Heart left ventricle (tissue), 16 donors: ENCODE measurements at regions of chr12 and their contacts with region 1.

Region 1: DNA sequence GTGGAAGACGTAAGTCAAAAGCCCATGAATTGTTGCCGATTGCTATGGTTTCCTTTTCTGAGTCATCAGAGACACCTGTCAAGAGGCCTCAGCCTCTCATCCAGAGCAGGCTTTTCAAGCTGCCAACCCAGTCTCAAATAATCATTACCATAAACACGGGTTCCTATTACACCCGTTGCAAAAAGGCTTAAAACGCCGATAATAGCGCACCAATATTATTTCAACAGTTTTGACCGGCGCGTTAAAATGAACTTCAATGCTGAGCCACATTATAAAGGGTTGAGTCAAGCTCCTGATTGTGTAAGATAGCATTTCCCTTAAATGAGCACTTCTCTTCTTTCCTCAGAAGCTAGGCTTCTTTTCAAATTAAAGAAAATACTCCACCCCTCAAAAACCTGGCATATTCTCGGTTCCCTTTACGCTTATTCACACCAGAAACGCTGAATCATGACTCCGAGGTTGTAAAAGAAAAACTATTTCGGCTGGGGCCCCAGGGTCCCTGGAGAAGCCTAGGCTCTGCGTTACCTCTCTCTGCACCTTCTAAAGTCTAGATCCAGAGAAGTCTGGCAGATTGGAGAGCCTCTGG is 1.4 kb downstream of the TMTC1 start:
- DNase-seq: no peak
- ATAC-seq: peak; percentile 39 to 49 (median 46)
- H3K4me3 ChIP-seq: peak overlapping the region; percentile 52 to 97 (median 84)
- H3K27ac ChIP-seq: peak overlapping the region; percentile 69 to 94 (median 89)
- H3K4me1 ChIP-seq: peaks cover 0 to 52% (median 12%) of the 10 kb centered on the region in 12 donors
- H3K27me3 ChIP-seq: peaks cover 0 to 12% (median 0%) of the 10 kb centered on the region in 9 donors
- CTCF ChIP-seq: no peak
- POLR2A ChIP-seq: no peak

Region 2: DNA sequence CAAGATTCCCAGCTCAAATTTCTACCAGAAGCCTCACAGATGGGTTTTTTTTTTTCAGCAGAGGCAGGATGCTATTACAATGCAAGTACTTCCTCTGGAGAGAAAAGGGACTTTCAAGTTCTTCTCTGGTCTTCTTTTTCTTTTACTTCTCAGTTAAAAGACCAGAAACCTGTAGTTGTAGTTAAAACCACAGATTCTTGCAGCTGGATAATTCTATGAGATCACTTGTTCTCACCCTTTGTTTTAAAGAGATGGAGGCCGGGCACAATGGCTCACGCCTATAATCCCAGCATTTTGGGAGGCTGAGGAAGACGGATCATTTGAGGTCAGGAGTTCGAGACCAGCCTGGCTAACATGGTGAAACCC is 237.3 kb before region 1 on chr12:
- intact Hi-C with region 1: loop called in 8 of 10 experiments (anchors 5 to 10 kb)
- DNase-seq: no peak
- ATAC-seq: no peak
- H3K4me3 ChIP-seq: no peak overlapping the region
- H3K27ac ChIP-seq: no peak overlapping the region
- H3K4me1 ChIP-seq: peaks cover 0 to 32% (median 5%) of the 10 kb centered on the region in 12 donors
- H3K27me3 ChIP-seq: no peaks in the 10 kb centered on the region
- CTCF ChIP-seq: no peak
- POLR2A ChIP-seq: no peak

Region 3: GRCh38 chr12:29562167-29562776 is 220.1 kb before region 1 on chr12:
- intact Hi-C with region 1: loop called in 5 of 10 experiments (anchors 5 to 10 kb)
- DNase-seq: peak in 4 of 5 donors; percentile 30 to 69 (median 59)
- ATAC-seq: peak; percentile 76 to 97 (median 96)
- H3K4me3 ChIP-seq: no peak overlapping the region
- H3K27ac ChIP-seq: peak overlapping the region; percentile 39 to 87 (median 72)
- H3K4me1 ChIP-seq: peaks cover 8 to 69% (median 34%) of the 10 kb centered on the region in 12 donors
- H3K27me3 ChIP-seq: no peaks in the 10 kb centered on the region
- CTCF ChIP-seq: no peak
- POLR2A ChIP-seq: no peak

Region 4: DNA sequence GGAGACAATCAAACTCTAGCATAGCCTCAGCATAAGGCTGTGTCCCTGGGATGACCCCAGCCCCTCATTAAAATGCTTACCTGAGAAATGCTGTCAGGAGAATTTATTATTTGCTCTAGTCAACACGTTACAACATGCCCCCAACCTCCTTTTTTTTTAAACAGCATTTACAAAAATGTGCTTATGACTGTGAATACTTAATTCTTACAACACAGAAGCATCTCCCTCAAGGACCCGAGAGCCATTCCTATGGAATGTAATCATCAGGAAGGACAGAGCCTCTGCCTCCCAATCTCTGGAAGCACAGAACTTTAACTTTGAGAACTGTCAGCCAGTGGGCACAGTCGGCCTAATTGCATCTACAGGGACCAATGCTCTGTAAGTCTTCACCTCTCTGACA is 148.3 kb before region 1 on chr12:
- intact Hi-C with region 1: loop called in 1 of 10 experiments (anchors 10 kb)
- DNase-seq: no peak
- ATAC-seq: no peak
- H3K4me3 ChIP-seq: no peak overlapping the region
- H3K27ac ChIP-seq: no peak overlapping the region
- H3K4me1 ChIP-seq: no peaks in the 10 kb centered on the region
- H3K27me3 ChIP-seq: no peaks in the 10 kb centered on the region
- CTCF ChIP-seq: no peak
- POLR2A ChIP-seq: no peak

Region 5: GRCh38 chr12:29662734-29663323 is 119.5 kb before region 1 on chr12:
- intact Hi-C with region 1: loop called in 1 of 10 experiments (anchors 10 kb)
- DNase-seq: no peak
- ATAC-seq: peak in 3 of 4 donors; percentile 25 to 69 (median 57)
- H3K4me3 ChIP-seq: no peak overlapping the region
- H3K27ac ChIP-seq: peak overlapping the region in 2 of 12 donors; percentile 22
- H3K4me1 ChIP-seq: peaks cover 0 to 26% (median 0%) of the 10 kb centered on the region in 12 donors
- H3K27me3 ChIP-seq: no peaks in the 10 kb centered on the region
- CTCF ChIP-seq: no peak
- POLR2A ChIP-seq: no peak

Region 6: GRCh38 chr12:29725587-29726320 is 56.6 kb before region 1 on chr12:
- intact Hi-C with region 1: loop called in 2 of 10 experiments (anchors 5 kb)
- DNase-seq: peak; percentile 74 to 86 (median 82)
- ATAC-seq: peak; percentile 94 to 96 (median 96)
- H3K4me3 ChIP-seq: peak overlapping the region in 1 of 12 donors; percentile 4
- H3K27ac ChIP-seq: peak overlapping the region; percentile 63 to 89 (median 78)
- H3K4me1 ChIP-seq: peaks cover 9 to 58% (median 28%) of the 10 kb centered on the region in 12 donors
- H3K27me3 ChIP-seq: no peaks in the 10 kb centered on the region
- CTCF ChIP-seq: no peak
- POLR2A ChIP-seq: peak in 1 of 2 donors; percentile 37

Region 7: GRCh38 chr12:29762637-29763300 is 19.6 kb before region 1 on chr12:
- intact Hi-C with region 1: loop called in 1 of 10 experiments (anchors 2 kb)
- DNase-seq: peak in 4 of 5 donors; percentile 43 to 78 (median 63)
- ATAC-seq: peak; percentile 92 to 97 (median 96)
- H3K4me3 ChIP-seq: no peak overlapping the region
- H3K27ac ChIP-seq: peak overlapping the region in 10 of 12 donors; percentile 9 to 53 (median 28)
- H3K4me1 ChIP-seq: peaks cover 0 to 26% (median 15%) of the 10 kb centered on the region in 12 donors
- H3K27me3 ChIP-seq: no peaks in the 10 kb centered on the region
- CTCF ChIP-seq: no peak
- POLR2A ChIP-seq: no peak

Region 8: GRCh38 chr12:29901585-29901984 is 119.2 kb after region 1 on chr12:
- intact Hi-C with region 1: no loop called
- DNase-seq: no peak
- ATAC-seq: no peak
- H3K4me3 ChIP-seq: no peak overlapping the region
- H3K27ac ChIP-seq: no peak overlapping the region
- H3K4me1 ChIP-seq: no peaks in the 10 kb centered on the region
- H3K27me3 ChIP-seq: no peaks in the 10 kb centered on the region
- CTCF ChIP-seq: peak in 6 of 12 donors; percentile 8 to 36 (median 20)
- POLR2A ChIP-seq: no peak